Dendritic cell treated with granulocyte-macrophage colony-stimulating factor and Interleukin-4, amounts not matched to agents 40 ng/mL and 50 ng/mL, for 4 days (primary cell): ENCODE measurements at regions of chr1 and their contacts with region 1.

Region 1: DNA sequence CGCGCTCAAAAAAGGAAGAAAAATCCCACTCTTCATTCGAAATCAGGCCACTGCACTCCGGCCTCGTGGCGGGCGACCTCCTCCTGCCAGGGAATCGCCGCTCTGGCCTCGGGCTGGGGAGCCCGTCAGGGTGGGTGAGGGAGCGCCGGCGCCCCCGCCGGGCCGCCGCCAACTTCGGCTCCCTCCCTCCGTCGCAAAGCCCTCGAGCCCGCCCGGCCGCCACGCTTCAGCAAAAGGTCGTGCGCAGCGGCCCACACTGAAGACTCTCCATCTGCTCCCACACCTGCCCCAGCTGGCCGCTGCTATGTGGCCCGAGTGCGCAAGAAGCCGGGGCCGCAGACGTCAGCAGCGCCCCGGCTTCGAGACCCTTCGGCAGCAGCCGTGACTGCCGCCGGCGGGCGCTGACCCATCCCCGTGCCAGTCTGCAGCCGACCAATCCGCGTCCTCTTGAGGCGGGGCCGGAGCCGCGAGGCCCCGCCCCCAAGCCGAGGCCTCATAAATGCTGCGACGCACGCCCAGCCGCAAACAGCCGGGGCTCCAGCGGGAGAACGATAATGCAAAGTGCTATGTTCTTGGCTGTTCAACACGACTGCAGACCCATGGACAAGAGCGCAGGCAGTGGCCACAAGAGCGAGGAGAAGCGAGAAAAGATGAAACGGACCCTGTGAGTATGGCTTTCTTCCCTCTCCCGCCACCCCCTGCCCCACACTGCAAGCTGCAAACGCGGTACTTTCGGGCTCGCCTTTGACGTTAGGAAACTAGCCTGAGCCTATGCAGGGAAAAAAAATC is at the start of gene RGS2:
- H3K4me3 Mint-ChIP-seq: peak within 1 kb of the TSS; percentile 93
- H3K27ac Mint-ChIP-seq: peak within 1 kb of the TSS; percentile 90
- H3K4me1 Mint-ChIP-seq: peaks cover 45% of the 10 kb centered on the region
- H3K27me3 Mint-ChIP-seq: no peaks in the 10 kb centered on the region

Region 2: GRCh38 chr1:192609110-192610079 is 199.3 kb before region 1 on chr1:
- intact Hi-C with region 1: loop called (anchors 1 kb)
- H3K4me3 Mint-ChIP-seq: peak overlapping the region; percentile 9
- H3K27ac Mint-ChIP-seq: peak overlapping the region; percentile 56
- H3K4me1 Mint-ChIP-seq: peaks cover 21% of the 10 kb centered on the region
- H3K27me3 Mint-ChIP-seq: peaks cover 10% of the 10 kb centered on the region

Region 3: DNA sequence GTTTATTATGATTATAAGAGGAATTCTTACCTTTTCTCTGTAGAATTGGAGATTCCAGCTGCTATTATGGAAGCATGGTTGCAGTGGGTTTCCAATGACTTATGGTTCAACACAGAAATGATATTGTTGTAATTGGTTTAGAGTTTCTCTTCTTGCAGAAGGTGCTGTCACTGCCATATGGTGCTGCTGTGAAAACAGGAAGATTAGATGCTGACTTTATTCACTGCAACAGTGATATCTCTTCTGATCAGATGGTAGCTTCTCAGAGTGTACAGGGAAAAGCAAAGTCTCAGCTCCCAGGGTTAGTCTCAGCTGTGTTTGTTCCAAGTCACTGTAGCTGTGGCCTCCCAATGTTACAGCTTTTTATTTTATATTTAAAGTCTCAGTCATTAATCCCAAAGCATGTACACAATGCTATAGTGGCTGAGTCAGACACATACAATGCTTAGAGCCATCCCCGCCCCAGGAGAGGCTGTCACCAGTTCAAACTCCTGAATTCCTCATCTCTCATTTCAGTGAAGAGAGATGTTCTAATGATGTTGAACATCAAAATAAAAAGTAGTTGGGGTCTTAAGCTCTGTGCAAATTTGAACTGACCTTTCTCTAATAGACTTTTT is 42.6 kb before region 1 on chr1:
- intact Hi-C with region 1: no loop called
- H3K4me3 Mint-ChIP-seq: no peak overlapping the region
- H3K27ac Mint-ChIP-seq: no peak overlapping the region
- H3K4me1 Mint-ChIP-seq: no peaks in the 10 kb centered on the region
- H3K27me3 Mint-ChIP-seq: no peaks in the 10 kb centered on the region

Region 4: GRCh38 chr1:192904438-192904895 is 95.8 kb after region 1 on chr1:
- intact Hi-C with region 1: no loop called
- H3K4me3 Mint-ChIP-seq: no peak overlapping the region
- H3K27ac Mint-ChIP-seq: no peak overlapping the region
- H3K4me1 Mint-ChIP-seq: peaks cover 21% of the 10 kb centered on the region
- H3K27me3 Mint-ChIP-seq: no peaks in the 10 kb centered on the region

Region 5: DNA sequence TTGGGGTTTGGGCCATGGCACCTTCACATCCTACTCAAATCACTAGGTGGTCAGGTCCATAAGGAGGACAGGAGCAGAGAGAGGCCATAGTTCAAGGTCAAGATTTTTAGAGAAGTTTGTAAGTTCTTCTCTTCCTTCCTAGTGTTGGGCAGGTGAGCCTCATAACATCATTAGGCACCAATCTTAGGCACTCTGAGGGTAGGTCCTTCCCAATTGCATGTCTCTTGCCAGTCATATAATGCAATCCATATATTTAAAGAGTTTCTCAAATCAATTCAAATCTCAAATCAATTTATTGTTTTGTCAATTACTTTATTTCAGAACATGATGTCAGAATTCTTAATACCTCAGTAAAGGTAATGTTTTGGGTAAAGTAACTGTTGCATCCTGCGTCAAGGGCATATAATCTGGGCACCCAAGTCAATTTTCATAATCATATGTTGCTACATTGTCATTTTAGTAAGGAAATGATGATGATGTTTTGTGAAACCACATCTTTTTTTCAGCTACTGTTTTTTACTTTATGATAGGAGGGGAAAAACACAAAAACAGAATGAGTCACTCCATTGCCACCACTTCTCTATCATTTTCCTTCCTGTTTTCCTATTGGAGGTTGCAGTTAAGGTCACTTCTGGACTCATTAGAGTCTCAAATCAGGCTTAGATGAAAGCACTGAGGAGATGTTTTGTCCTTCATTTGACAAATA is 127.8 kb after region 1 on chr1:
- intact Hi-C with region 1: loop called (anchors 5 kb)
- H3K4me3 Mint-ChIP-seq: no peak overlapping the region
- H3K27ac Mint-ChIP-seq: peak overlapping the region; percentile 66
- H3K4me1 Mint-ChIP-seq: peaks cover 34% of the 10 kb centered on the region
- H3K27me3 Mint-ChIP-seq: no peaks in the 10 kb centered on the region

Region 6: GRCh38 chr1:193059268-193060225 is 250.8 kb after region 1 on chr1 and contains the starts of genes RO60 and UCHL5:
- intact Hi-C with region 1: loop called (anchors 2 kb)
- H3K4me3 Mint-ChIP-seq: peak within 1 kb of the TSS; percentile 98
- H3K27ac Mint-ChIP-seq: peak within 1 kb of the TSS; percentile 97
- H3K4me1 Mint-ChIP-seq: peaks cover 39% of the 10 kb centered on the region
- H3K27me3 Mint-ChIP-seq: no peaks in the 10 kb centered on the region

Region 7: GRCh38 chr1:193121616-193122593 is 313.2 kb after region 1 on chr1 and contains the start of gene CDC73:
- intact Hi-C with region 1: loop called (anchors 2 kb)
- H3K4me3 Mint-ChIP-seq: peak within 1 kb of the TSS; percentile 78
- H3K27ac Mint-ChIP-seq: peak within 1 kb of the TSS; percentile 94
- H3K4me1 Mint-ChIP-seq: peaks cover 43% of the 10 kb centered on the region
- H3K27me3 Mint-ChIP-seq: peaks cover 4% of the 10 kb centered on the region